B cell (primary cell): ENCODE measurements at regions of chr15 and their contacts with region 1.

Region 1: GRCh38 chr15:70466895-70467529 is 296.3 kb downstream of the UACA start:
- DNase-seq: peak; percentile 70
- ATAC-seq: peak; percentile 84
- H3K4me3 ChIP-seq: no peak overlapping the region
- H3K4me3 Mint-ChIP-seq: no peak overlapping the region
- H3K27ac ChIP-seq: no peak overlapping the region
- H3K27ac Mint-ChIP-seq: peak overlapping the region; percentile 3
- H3K4me1 ChIP-seq: peaks cover 11 to 15% of the 10 kb centered on the region in 2 donors
- H3K4me1 Mint-ChIP-seq: peaks cover 21% of the 10 kb centered on the region
- H3K27me3 ChIP-seq: peaks cover 0 to 12% (median under 1%) of the 10 kb centered on the region in 4 experiments
- H3K27me3 Mint-ChIP-seq: peaks cover 9% of the 10 kb centered on the region
- CTCF ChIP-seq: peak; percentile 71

Region 2: GRCh38 chr15:69523010-69524001 is 943.7 kb before region 1 on chr15:
- CTCF ChIA-PET with region 1: interaction called, 4 read pairs
- POLR2A ChIA-PET with region 1: no interaction called
- intact Hi-C with region 1: loop called (anchors 2 kb)
- DNase-seq: peak; percentile 47
- ATAC-seq: no peak
- H3K4me3 ChIP-seq: no peak overlapping the region
- H3K4me3 Mint-ChIP-seq: no peak overlapping the region
- H3K27ac ChIP-seq: no peak overlapping the region
- H3K27ac Mint-ChIP-seq: no peak overlapping the region
- H3K4me1 ChIP-seq: no peaks in the 10 kb centered on the region
- H3K4me1 Mint-ChIP-seq: no peaks in the 10 kb centered on the region
- H3K27me3 ChIP-seq: peaks cover 0 to 7% (median 2%) of the 10 kb centered on the region in 4 experiments
- H3K27me3 Mint-ChIP-seq: peaks cover 8% of the 10 kb centered on the region
- CTCF ChIP-seq: peak; percentile 70

Region 3: GRCh38 chr15:69729161-69729748 is 737.8 kb before region 1 on chr15:
- CTCF ChIA-PET with region 1: interaction called, 6 read pairs
- POLR2A ChIA-PET with region 1: no interaction called
- intact Hi-C with region 1: loop called (anchors 5 kb)
- DNase-seq: peak; percentile 76
- ATAC-seq: peak; percentile 57
- H3K4me3 ChIP-seq: no peak overlapping the region
- H3K4me3 Mint-ChIP-seq: no peak overlapping the region
- H3K27ac ChIP-seq: no peak overlapping the region
- H3K27ac Mint-ChIP-seq: peak overlapping the region; percentile 10
- H3K4me1 ChIP-seq: peaks cover 6 to 20% of the 10 kb centered on the region in 2 donors
- H3K4me1 Mint-ChIP-seq: peaks cover 26% of the 10 kb centered on the region
- H3K27me3 ChIP-seq: peaks cover 0 to 10% (median 1%) of the 10 kb centered on the region in 4 experiments
- H3K27me3 Mint-ChIP-seq: peaks cover 6% of the 10 kb centered on the region
- CTCF ChIP-seq: peak; percentile 92

Region 4: DNA sequence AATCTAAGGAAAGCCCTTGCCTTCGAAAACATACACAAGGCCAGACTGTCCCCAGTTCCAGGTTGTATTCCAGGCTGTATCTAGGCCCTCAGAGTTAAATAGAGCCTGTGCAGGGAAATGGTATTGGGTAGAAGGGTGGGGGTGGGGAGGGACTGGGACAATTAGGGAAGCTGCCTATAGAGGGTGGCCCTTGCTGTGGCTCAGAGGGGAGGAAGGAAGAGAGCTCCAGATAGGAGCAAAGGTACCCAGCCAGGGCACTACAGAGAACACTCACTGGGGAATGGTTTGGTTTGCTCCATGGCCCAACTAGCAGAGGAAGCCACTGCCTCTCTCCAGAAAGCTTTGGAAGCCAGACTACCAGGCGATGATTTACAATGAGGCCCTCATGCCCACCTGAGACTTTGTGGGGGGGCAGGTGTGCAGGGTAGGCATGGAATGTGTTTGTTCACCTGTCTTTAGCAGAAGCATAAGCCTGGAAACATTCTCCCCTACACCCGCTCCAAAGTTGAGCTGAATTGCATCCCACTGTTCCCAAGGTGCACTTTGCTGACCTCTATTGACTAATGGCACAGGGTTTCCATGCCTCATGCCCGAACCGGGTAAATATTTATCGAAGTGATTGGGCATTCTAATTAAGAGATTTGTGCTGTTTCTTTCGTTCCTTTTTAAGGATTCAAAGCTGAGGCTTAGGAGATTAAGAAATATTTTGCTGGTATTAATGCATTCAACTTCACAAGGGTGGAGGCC is 363.0 kb before region 1 on chr15:
- CTCF ChIA-PET with region 1: interaction called, 29 read pairs
- POLR2A ChIA-PET with region 1: no interaction called
- intact Hi-C with region 1: no loop called
- DNase-seq: no peak
- ATAC-seq: no peak
- H3K4me3 ChIP-seq: no peak overlapping the region
- H3K4me3 Mint-ChIP-seq: no peak overlapping the region
- H3K27ac ChIP-seq: no peak overlapping the region
- H3K27ac Mint-ChIP-seq: peak overlapping the region; percentile 17
- H3K4me1 ChIP-seq: peaks cover 32 to 36% of the 10 kb centered on the region in 2 donors
- H3K4me1 Mint-ChIP-seq: peaks cover 35% of the 10 kb centered on the region
- H3K27me3 ChIP-seq: peaks cover 0 to 31% (median 10%) of the 10 kb centered on the region in 4 experiments
- H3K27me3 Mint-ChIP-seq: peaks cover 6% of the 10 kb centered on the region
- CTCF ChIP-seq: no peak

Region 5: DNA sequence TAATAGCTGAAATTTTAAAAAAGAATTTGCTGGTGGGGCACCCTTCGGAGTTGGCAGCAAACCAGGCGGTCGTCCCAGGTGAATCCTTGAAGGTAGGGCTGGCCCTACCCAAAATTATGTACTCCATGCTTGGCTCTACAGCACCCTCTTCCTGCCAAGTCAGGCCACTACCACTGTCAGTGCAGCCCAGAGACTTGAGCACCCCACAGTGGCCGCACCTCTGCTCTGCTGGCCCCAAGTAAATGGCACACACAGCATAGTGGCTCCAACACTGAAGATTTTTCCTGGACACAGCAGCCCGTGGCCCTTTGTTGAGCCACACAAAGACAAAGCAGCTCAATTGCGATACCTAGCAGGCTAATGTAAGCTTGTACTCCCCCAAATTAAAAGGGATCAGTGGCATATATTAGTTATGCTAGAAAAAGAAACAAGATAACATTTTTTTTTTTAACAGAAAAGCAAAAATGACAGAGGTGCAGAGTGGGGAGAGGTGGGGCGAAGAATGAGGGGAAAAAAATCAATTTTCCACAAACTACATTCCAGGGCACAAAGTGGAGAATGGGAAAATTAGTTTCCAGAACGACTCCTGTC is 45.9 kb after region 1 on chr15:
- CTCF ChIA-PET with region 1: interaction called, 18 read pairs
- POLR2A ChIA-PET with region 1: no interaction called
- intact Hi-C with region 1: no loop called
- DNase-seq: peak; percentile 56
- ATAC-seq: peak; percentile 83
- H3K4me3 ChIP-seq: no peak overlapping the region
- H3K4me3 Mint-ChIP-seq: no peak overlapping the region
- H3K27ac ChIP-seq: no peak overlapping the region
- H3K27ac Mint-ChIP-seq: no peak overlapping the region
- H3K4me1 ChIP-seq: peaks cover 3 to 17% of the 10 kb centered on the region in 2 donors
- H3K4me1 Mint-ChIP-seq: peaks cover 22% of the 10 kb centered on the region
- H3K27me3 ChIP-seq: no peaks in the 10 kb centered on the region
- H3K27me3 Mint-ChIP-seq: peaks cover 17% of the 10 kb centered on the region
- CTCF ChIP-seq: peak; percentile 65